Posterior vena cava (tissue), 2 donors: ENCODE measurements at regions of chr6 and their contacts with region 1.

Region 1: DNA sequence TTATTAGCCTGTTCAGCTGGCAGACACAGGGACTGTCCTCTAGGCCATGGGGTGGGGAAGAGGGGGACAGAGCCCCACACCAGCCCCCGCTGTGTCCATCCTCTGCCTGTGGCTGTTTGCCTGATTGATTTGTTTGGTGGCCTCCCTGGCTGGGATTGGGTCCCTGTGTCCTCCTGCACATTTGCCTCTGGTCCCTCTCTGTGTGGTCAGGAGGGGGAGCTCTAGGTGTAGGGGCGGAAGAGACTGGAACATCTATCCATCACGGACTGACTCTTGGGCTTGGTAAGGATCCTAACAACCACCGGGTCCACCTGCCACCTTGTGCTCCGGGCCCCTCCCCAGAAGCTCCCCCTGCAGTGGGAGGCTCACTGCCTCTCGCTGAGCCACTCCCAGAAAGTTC is 38.4 kb upstream of the CCDC167 start:
- DNase-seq: no peak

Region 2: GRCh38 chr6:37222125-37222967 is 315.8 kb before region 1 on chr6:
- intact Hi-C with region 1: no loop called
- DNase-seq: peak; percentile 88

Region 3: DNA sequence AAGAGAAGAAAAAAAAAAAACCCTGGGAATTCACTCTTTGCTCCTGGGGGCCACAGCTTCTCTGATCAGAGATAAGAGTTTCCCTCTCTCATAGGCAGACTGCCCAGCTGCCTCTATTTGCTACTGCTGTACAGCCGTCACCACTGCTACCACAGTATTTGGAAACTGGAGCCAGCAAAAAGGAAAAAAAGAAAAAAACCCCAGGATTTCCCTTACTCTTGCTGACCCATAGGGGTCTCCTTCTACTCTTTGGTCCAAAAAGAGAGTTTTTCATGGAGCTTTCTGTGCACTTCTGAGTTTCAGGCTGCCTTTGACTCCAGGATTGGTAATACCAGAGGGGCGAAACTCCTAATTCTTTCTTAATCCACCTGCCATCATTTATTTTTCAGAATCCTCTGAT is 69.8 kb after region 1 on chr6:
- intact Hi-C with region 1: no loop called
- DNase-seq: peak; percentile 4

Region 4: DNA sequence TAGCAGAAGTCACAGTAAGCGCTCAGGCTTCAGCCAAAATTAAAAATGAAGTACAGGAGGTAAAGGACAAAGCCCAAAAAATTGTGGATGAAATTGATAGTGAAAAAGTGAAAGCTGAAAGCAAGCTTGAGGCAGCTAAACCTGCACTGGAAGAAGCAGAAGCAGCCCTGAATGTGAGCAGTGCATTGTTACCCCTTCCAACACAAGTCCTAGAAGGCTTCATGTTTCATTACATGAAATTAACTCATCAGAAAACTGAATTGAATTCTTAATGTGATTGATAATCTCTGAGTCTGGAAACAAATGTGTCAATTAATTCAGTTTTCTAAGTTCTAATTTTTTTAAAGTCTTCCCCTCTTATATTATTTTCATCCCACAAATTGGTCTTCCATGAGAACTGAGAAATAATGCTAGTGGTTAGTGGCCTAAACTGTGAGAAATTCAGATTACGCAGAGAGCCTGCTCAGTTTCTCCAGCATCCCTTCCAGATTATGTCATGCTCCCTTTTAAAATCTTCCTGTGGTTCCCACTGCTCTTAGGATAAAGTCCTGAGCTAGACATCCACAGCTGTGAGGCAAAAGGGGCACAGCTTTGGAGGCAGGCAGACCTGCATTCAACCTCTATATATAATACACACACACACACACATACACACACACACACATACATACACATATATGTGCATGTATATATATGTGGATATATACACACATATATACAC is 1377.3 kb after region 1 on chr6:
- intact Hi-C with region 1: loop called in 1 of 2 experiments (anchors 10 kb)
- DNase-seq: no peak